ENCODE measurements at regions of chr6 and their contacts with region 1.

Region 1: GRCh38 chr6:14876778-14877613 is 368.9 kb upstream of the JARID2 start:
- DNase-seq: peak; percentile 59
- H3K4me3 Mint-ChIP-seq: peak overlapping the region; percentile 40
- H3K27ac Mint-ChIP-seq: peak overlapping the region; percentile 97
- H3K4me1 Mint-ChIP-seq: peaks cover 74% of the 10 kb centered on the region
- H3K27me3 Mint-ChIP-seq: no peaks in the 10 kb centered on the region

Region 2: GRCh38 chr6:14210663-14211561 is 666.1 kb before region 1 on chr6:
- CTCF ChIA-PET with region 1: no interaction called
- POLR2A ChIA-PET with region 1: interaction called, 3 read pairs
- intact Hi-C with region 1: loop called (anchors 5 kb)
- DNase-seq: peak; percentile 94
- H3K4me3 Mint-ChIP-seq: peak overlapping the region; percentile 74
- H3K27ac Mint-ChIP-seq: peak overlapping the region; percentile 85
- H3K4me1 Mint-ChIP-seq: peaks cover 17% of the 10 kb centered on the region
- H3K27me3 Mint-ChIP-seq: no peaks in the 10 kb centered on the region

Region 3: DNA sequence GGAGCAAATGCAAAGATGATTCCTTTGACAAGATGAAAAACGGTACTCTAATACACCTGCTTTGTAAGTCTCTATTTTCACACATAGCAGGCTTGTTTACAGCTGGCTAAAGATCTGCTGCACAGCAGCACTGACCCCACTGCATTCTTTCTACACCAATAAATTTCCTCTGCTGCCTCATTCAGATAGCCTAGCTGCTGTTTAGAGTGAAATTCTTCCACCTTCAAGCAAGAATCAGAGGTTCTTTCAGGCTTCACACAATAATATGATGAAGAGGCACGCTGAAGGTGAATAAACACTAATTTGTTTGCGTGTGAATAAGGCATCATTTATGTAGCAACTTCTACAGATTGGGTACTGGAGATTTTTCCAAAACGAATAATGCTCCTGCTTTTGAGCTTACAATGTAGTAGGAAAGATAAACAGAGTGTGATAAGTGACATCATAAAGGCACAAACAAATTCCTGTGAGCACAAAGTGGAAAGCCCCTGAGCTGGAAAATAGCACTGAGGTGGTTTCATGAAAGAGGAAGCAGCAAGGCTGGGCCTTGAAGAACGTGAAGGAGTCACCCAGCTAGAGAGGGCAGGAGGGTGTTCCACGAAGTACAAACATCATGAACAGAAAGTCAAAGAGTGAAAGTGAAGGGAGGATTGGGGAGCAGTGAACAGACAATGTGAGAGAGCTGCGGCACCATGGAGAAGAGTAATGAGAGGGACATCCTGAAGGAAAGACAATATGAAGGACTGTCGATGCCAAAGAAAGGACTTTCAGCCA is 216.0 kb before region 1 on chr6:
- CTCF ChIA-PET with region 1: no interaction called
- POLR2A ChIA-PET with region 1: no interaction called
- intact Hi-C with region 1: loop called (anchors 5 kb)
- DNase-seq: peak; percentile 64
- H3K4me3 Mint-ChIP-seq: no peak overlapping the region
- H3K27ac Mint-ChIP-seq: no peak overlapping the region
- H3K4me1 Mint-ChIP-seq: peaks cover 57% of the 10 kb centered on the region
- H3K27me3 Mint-ChIP-seq: no peaks in the 10 kb centered on the region

Region 4: GRCh38 chr6:14743465-14744211 is 133.4 kb before region 1 on chr6:
- CTCF ChIA-PET with region 1: interaction called, 4 read pairs
- POLR2A ChIA-PET with region 1: interaction called, 33 read pairs
- intact Hi-C with region 1: loop called (anchors 1 kb)
- DNase-seq: peak; percentile 93
- H3K4me3 Mint-ChIP-seq: peak overlapping the region; percentile 58
- H3K27ac Mint-ChIP-seq: peak overlapping the region; percentile 98
- H3K4me1 Mint-ChIP-seq: peaks cover 83% of the 10 kb centered on the region
- H3K27me3 Mint-ChIP-seq: no peaks in the 10 kb centered on the region

Region 5: DNA sequence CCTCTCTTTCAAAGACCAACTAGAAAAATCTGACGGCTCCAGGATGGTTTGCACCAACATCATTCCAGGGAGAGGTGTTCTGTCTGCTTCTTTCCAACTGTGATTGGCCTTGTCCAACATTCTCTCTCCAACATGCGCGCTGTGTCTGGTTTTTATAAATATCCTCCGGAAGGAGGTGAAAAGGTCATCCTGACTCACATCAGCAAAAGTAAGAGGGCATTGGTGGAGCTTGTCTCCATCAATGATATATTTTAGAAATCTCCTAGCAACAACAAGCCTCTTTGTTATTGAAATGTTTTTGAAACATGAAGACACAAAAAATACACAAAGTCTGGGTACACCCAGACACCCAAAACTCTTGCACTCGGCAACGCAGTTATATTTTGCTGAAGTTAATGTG is 106.4 kb before region 1 on chr6:
- CTCF ChIA-PET with region 1: no interaction called
- POLR2A ChIA-PET with region 1: no interaction called
- intact Hi-C with region 1: no loop called
- DNase-seq: no peak
- H3K4me3 Mint-ChIP-seq: no peak overlapping the region
- H3K27ac Mint-ChIP-seq: no peak overlapping the region
- H3K4me1 Mint-ChIP-seq: no peaks in the 10 kb centered on the region
- H3K27me3 Mint-ChIP-seq: peaks cover 1% of the 10 kb centered on the region

Region 6: GRCh38 chr6:14857501-14857900 is 19.5 kb before region 1 on chr6:
- CTCF ChIA-PET with region 1: interaction called, 5 read pairs
- POLR2A ChIA-PET with region 1: interaction called, 74 read pairs
- intact Hi-C with region 1: loop called (anchors 1 kb)
- DNase-seq: peak; percentile 84
- H3K4me3 Mint-ChIP-seq: peak overlapping the region; percentile 56
- H3K27ac Mint-ChIP-seq: peak overlapping the region; percentile 95
- H3K4me1 Mint-ChIP-seq: peaks cover 48% of the 10 kb centered on the region
- H3K27me3 Mint-ChIP-seq: no peaks in the 10 kb centered on the region

Region 7: DNA sequence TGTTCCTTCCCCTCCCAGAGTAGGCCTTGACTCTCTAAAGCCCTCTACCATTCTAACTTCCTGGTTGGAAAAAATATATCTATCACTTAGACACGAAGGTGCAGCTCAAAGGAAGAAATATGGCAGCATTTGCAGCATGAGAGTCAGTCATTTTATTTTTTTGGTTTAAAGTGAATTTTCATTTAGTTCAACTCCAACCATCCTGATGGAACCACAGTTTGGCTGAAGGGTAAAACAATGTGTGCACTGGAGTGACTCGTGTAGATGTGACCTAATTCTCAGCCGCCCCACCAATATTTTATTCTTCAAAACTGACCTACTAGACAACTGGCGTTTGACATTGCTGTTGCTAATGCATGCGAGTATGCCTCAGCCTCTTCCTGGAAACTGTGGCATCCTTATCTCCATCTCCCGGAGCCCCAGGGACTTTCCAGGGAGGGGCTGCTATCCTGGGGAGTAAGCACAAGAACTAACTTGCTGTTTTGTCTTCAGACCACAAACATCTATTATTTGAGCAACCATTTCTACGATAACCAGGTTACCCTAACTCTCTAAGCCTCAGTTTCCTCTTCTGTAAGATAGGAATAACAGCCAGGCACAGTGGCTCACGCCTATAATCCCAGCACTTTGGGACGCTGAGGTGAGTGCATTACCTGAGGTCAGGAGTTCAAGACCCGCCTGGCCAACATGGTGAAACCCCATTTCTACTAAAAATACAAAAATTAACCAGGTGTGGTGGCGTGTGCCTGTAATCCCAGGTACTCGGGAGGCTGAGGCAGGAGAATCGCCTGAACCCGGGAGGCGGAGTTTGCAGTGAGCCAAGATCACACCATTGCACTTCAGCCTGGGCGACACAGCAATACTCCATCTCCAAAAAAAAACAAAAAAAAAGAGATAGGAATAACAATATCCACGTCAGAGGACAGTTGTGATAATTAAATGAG is 220.2 kb after region 1 on chr6:
- CTCF ChIA-PET with region 1: no interaction called
- POLR2A ChIA-PET with region 1: no interaction called
- intact Hi-C with region 1: no loop called
- DNase-seq: peak; percentile 36
- H3K4me3 Mint-ChIP-seq: no peak overlapping the region
- H3K27ac Mint-ChIP-seq: no peak overlapping the region
- H3K4me1 Mint-ChIP-seq: peaks cover 6% of the 10 kb centered on the region
- H3K27me3 Mint-ChIP-seq: peaks cover 1% of the 10 kb centered on the region

Region 8: DNA sequence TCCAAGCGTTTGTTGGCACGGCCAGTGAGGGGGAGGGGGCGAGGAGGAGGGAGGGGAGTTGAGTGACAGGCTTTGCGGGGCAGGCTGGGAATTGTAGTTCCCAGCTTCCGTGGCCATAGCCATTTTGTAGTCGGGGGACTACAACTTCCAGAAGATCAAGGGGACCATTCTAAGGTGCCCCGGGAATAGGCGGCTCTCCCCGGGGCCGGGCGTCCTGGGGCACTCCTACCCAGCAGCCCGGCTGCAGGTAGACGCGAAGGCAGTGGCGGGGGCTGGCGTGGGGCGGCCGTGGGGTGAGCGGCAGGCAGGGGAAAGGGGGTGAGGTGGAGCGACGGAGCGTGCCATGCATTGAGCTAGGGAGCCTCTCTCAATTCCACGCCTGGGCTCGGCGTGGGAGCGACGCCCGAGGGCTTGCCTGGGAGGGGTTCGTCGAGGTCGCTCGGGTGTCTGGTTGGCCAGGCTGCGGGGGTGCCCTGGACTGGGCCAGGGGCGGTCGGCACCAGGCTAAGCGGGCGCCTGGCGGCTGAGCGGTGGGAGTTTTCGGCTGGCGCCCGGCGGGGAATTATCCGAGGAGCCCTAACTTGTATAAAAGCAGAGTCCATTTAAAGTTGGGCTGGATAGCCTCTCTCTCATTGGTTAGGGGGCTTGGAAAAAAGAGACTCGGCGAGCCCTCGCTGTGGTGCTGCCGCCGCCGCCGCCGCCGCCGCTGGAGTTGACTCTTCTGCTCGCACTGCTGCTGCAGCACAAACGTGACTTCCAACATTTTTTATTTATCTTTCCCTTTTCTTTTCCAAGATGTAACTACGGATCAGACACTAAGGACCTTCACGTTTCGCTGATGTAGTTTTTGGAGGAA is 368.6 kb after region 1 on chr6 and contains the start of gene JARID2:
- CTCF ChIA-PET with region 1: interaction called, 4 read pairs
- POLR2A ChIA-PET with region 1: interaction called, 13 read pairs
- intact Hi-C with region 1: loop called (anchors 1 kb)
- DNase-seq: peak; percentile 98
- H3K4me3 Mint-ChIP-seq: peak within 1 kb of the TSS; percentile 100
- H3K27ac Mint-ChIP-seq: peak within 1 kb of the TSS; percentile 94
- H3K4me1 Mint-ChIP-seq: peaks cover 18% of the 10 kb centered on the region
- H3K27me3 Mint-ChIP-seq: peaks cover 1% of the 10 kb centered on the region
- total RNA-seq, gene JARID2: 41.4 to 44.0 TPM